GM12878 (cell line): ENCODE measurements at regions of chr11 and their contacts with region 1.

Region 1: GRCh38 chr11:94623120-94623735 is 56.1 kb downstream of the PIWIL4 start:
- DNase-seq: peak; percentile 16
- ATAC-seq: peak; percentile 97
- H3K4me3 ChIP-seq: no peak overlapping the region
- H3K27ac ChIP-seq: no peak overlapping the region
- H3K4me1 ChIP-seq: no peaks in the 10 kb centered on the region
- H3K27me3 ChIP-seq: no peaks in the 10 kb centered on the region
- CTCF ChIP-seq: peak; percentile 66 to 72 (median 69)
- EP300 ChIP-seq: no peak
- POLR2A ChIP-seq: no peak
- RAD21 ChIP-seq: peak; percentile 95

Region 2: DNA sequence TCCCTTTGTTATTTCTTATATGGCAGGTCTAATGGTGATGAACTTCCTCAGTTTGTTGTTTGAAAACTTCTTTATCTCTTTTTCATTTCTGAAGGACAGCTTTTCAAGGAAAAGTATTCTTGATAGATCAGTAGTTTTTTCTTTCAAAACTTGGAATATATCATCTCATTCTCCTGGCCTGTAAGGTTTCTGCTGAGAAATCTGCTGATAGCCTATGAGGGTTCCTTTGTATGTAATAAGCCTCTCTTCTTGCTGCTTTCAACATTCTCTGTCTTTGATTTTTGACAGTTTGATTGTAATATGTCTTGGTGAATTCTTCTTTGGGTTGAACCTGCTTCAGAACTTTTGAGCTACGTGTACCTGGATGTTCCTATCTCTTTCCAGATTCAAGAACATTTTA is 10.1 kb before region 1 on chr11:
- CTCF ChIA-PET with region 1: interaction called, 22 read pairs
- POLR2A ChIA-PET with region 1: no interaction called
- RAD21 ChIA-PET with region 1: interaction called, 4 read pairs
- SMC1A ChIA-PET with region 1: interaction called, 10 read pairs
- in situ Hi-C with region 1: no loop called
- intact Hi-C with region 1: no loop called
- DNase-seq: no peak
- ATAC-seq: no peak
- H3K4me3 ChIP-seq: no peak overlapping the region
- H3K27ac ChIP-seq: no peak overlapping the region
- H3K4me1 ChIP-seq: no peaks in the 10 kb centered on the region
- H3K27me3 ChIP-seq: no peaks in the 10 kb centered on the region
- CTCF ChIP-seq: no peak
- EP300 ChIP-seq: no peak
- POLR2A ChIP-seq: no peak
- RAD21 ChIP-seq: no peak

Region 3: DNA sequence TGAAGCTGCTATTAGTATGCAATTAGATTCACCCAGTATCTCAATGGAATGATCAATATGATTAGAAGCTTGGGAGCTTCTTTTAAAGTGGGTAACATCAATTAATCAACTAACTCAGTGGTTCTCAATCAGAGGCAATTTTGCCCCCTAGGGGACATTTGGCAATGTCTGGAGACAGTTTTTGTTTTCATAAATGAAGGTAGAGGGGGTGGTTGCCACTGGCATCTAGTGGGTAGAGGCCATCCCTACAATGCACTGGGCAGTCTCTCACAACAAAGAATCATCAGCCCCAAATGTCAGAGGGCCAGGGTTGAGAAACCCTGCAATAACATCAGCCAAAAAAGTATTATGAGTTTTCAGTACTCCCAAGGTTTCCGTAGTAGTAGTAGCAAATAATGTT is 139.0 kb after region 1 on chr11:
- CTCF ChIA-PET with region 1: interaction called, 5 read pairs
- POLR2A ChIA-PET with region 1: no interaction called
- RAD21 ChIA-PET with region 1: no interaction called
- SMC1A ChIA-PET with region 1: no interaction called
- in situ Hi-C with region 1: no loop called
- intact Hi-C with region 1: loop called (anchors 1 kb)
- DNase-seq: no peak
- ATAC-seq: peak; percentile 50; the same call in 2 of the 3 replicates
- H3K4me3 ChIP-seq: no peak overlapping the region
- H3K27ac ChIP-seq: no peak overlapping the region
- H3K4me1 ChIP-seq: no peaks in the 10 kb centered on the region
- H3K27me3 ChIP-seq: peaks cover under 1 to 6% of the 10 kb centered on the region in 2 experiments; a peak in 2 of 4 replicates
- CTCF ChIP-seq: peak in 2 of 3 experiments; percentile 18 to 20; a peak in 1 of 6 replicates
- EP300 ChIP-seq: no peak
- POLR2A ChIP-seq: no peak
- RAD21 ChIP-seq: 0 out of 2 replicates have a peak, but pooled peaks have one; percentile 3

Region 4: GRCh38 chr11:94897330-94897768 is 274.1 kb after region 1 on chr11:
- CTCF ChIA-PET with region 1: interaction called, 45 read pairs
- POLR2A ChIA-PET with region 1: no interaction called
- RAD21 ChIA-PET with region 1: interaction called, 23 read pairs
- SMC1A ChIA-PET with region 1: interaction called, 25 read pairs
- in situ Hi-C with region 1: loop called (anchors 5 kb)
- intact Hi-C with region 1: loop called (anchors 1 kb)
- DNase-seq: no peak
- ATAC-seq: peak; percentile 71
- H3K4me3 ChIP-seq: no peak overlapping the region
- H3K27ac ChIP-seq: no peak overlapping the region
- H3K4me1 ChIP-seq: no peaks in the 10 kb centered on the region
- H3K27me3 ChIP-seq: peaks cover 0 to 3% of the 10 kb centered on the region in 2 experiments; a peak in 1 of 4 replicates
- CTCF ChIP-seq: peak; percentile 81 to 89 (median 88)
- EP300 ChIP-seq: no peak
- POLR2A ChIP-seq: no peak
- RAD21 ChIP-seq: peak; percentile 76

Region 5: GRCh38 chr11:94973099-94973968 is 350.1 kb after region 1 on chr11 and contains the starts of genes CWC15 and KDM4D:
- CTCF ChIA-PET with region 1: interaction called, 3 read pairs
- POLR2A ChIA-PET with region 1: no interaction called
- RAD21 ChIA-PET with region 1: interaction called, 3 read pairs
- SMC1A ChIA-PET with region 1: interaction called, 3 read pairs
- in situ Hi-C with region 1: no loop called
- intact Hi-C with region 1: loop called (anchors 5 kb)
- DNase-seq: peak; percentile 62
- ATAC-seq: peak; percentile 99
- H3K4me3 ChIP-seq: peak within 1 kb of the TSS; percentile 95
- H3K27ac ChIP-seq: peak within 1 kb of the TSS; percentile 78
- H3K4me1 ChIP-seq: no peaks in the 10 kb centered on the region
- H3K27me3 ChIP-seq: no peaks in the 10 kb centered on the region
- CTCF ChIP-seq: no peak
- EP300 ChIP-seq: no peak
- POLR2A ChIP-seq: peak; percentile 96
- RAD21 ChIP-seq: 0 out of 2 replicates have a peak, but pooled peaks have one; percentile 1
- polyA plus RNA-seq, gene CWC15: 122 to 142 TPM
- polyA plus RNA-seq, gene KDM4D: 0.63 to 0.69 TPM

Region 6: GRCh38 chr11:95138448-95138847 is 515.2 kb after region 1 on chr11:
- CTCF ChIA-PET with region 1: interaction called, 3 read pairs
- POLR2A ChIA-PET with region 1: no interaction called
- RAD21 ChIA-PET with region 1: interaction called, 4 read pairs
- SMC1A ChIA-PET with region 1: interaction called, 4 read pairs
- in situ Hi-C with region 1: no loop called
- intact Hi-C with region 1: loop called (anchors 5 kb)
- DNase-seq: no peak
- ATAC-seq: peak; percentile 97
- H3K4me3 ChIP-seq: no peak overlapping the region
- H3K27ac ChIP-seq: no peak overlapping the region
- H3K4me1 ChIP-seq: no peaks in the 10 kb centered on the region
- H3K27me3 ChIP-seq: 0 out of 4 replicates have a peak, but pooled peaks cover 0 to 2% of the 10 kb centered on the region in 2 experiments
- CTCF ChIP-seq: peak; percentile 36 to 65 (median 45); a peak in 5 of 6 replicates
- EP300 ChIP-seq: no peak
- POLR2A ChIP-seq: no peak
- RAD21 ChIP-seq: peak; percentile 84

Region 7: DNA sequence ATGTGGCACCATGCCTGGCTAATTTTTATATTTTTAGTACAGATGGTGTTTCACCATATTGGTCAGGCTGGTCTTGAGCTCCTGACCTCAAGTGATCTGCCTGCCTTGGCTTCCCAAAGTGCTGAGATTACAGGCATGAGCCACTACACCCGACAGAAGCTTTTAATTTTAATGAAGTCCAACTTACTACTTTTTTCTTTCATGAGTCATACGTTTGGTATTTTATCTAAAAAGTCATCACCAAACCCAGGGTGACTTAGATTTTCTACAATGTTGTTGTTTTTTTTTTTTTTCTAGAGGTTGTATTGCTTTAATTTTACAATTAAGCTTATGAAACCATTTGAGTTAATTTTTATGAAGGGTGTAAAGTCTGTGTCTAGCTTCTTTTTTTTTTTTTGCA is 1801.5 kb after region 1 on chr11:
- CTCF ChIA-PET with region 1: no interaction called
- POLR2A ChIA-PET with region 1: no interaction called
- RAD21 ChIA-PET with region 1: no interaction called
- SMC1A ChIA-PET with region 1: no interaction called
- in situ Hi-C with region 1: no loop called
- intact Hi-C with region 1: loop called (anchors 10 kb)
- DNase-seq: no peak
- ATAC-seq: no peak
- H3K4me3 ChIP-seq: no peak overlapping the region
- H3K27ac ChIP-seq: no peak overlapping the region
- H3K4me1 ChIP-seq: no peaks in the 10 kb centered on the region
- H3K27me3 ChIP-seq: no peaks in the 10 kb centered on the region
- CTCF ChIP-seq: no peak
- EP300 ChIP-seq: no peak
- POLR2A ChIP-seq: no peak
- RAD21 ChIP-seq: no peak